Thyroid gland (tissue), 4 donors: ENCODE measurements at regions of chr5 and their contacts with region 1.

Region 1: DNA sequence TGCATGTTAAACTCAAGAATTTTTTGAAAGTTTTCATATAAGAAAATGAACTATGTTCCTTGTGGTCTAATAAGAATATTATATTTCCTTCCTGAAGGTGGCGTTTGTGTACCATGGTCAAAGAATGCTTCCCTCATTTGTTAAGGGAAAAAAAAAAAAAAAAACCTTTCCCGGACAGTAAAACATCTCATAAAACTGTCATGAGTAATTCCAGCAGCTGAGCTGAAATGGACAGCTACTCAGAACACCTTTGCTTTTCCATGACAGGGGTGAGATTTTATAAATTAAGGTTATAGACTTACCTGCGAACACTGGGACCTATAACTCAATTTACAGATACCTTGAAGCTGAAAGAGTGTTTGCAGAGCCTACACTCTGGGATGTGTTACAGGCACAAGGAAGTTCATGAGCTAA is 113.2 kb upstream of the RANBP3L start:
- DNase-seq: no peak
- H3K4me3 ChIP-seq: no peak overlapping the region
- H3K27ac ChIP-seq: no peak overlapping the region
- H3K4me1 ChIP-seq: no peaks in the 10 kb centered on the region
- H3K27me3 ChIP-seq: no peaks in the 10 kb centered on the region
- CTCF ChIP-seq: peak in 4 of 6 experiments; percentile 6 to 75 (median 62)
- POLR2A ChIP-seq: no peak

Region 2: DNA sequence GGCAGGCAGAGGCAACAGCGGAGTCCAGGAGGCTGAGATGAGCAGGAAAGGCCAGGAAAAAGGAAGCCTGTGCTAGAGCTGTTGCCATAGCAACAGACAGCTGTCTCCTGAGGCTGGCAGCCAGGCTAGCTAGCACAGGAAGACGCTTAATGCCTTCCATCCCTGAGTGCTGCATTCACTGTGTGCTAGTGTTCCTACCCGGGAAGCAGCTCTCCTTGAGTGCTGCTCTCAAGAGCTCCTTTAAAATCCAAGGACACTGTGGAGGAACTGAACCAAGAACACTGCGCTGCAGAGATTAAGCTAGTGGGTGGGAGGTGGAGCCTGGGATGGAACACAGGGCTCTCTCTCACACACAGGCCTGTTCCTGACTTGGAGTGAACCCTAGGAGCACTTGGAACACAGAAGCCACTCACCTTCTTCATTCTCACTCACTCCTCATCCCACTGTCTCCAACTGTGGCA is 611.7 kb before region 1 on chr5:
- intact Hi-C with region 1: no loop called
- DNase-seq: peak; percentile 77 to 83
- H3K4me3 ChIP-seq: no peak overlapping the region
- H3K27ac ChIP-seq: peak overlapping the region in 2 of 3 donors; percentile 16 to 19
- H3K4me1 ChIP-seq: peaks cover 21 to 26% of the 10 kb centered on the region in 2 donors
- H3K27me3 ChIP-seq: no peaks in the 10 kb centered on the region
- CTCF ChIP-seq: no peak
- POLR2A ChIP-seq: no peak

Region 3: GRCh38 chr5:36507332-36507952 is 92.6 kb after region 1 on chr5:
- intact Hi-C with region 1: loop called (anchors 5 kb)
- DNase-seq: peak; percentile 75 to 86
- H3K4me3 ChIP-seq: no peak overlapping the region
- H3K27ac ChIP-seq: no peak overlapping the region
- H3K4me1 ChIP-seq: no peaks in the 10 kb centered on the region
- H3K27me3 ChIP-seq: no peaks in the 10 kb centered on the region
- CTCF ChIP-seq: peak; percentile 47 to 87 (median 66)
- POLR2A ChIP-seq: no peak

Region 4: GRCh38 chr5:36690041-36690961 is 275.4 kb after region 1 on chr5:
- intact Hi-C with region 1: loop called (anchors 5 kb)
- DNase-seq: peak; percentile 77 to 84
- H3K4me3 ChIP-seq: peak overlapping the region; percentile 48 to 79 (median 56)
- H3K27ac ChIP-seq: peak overlapping the region; percentile 34 to 67 (median 58)
- H3K4me1 ChIP-seq: peaks cover 11 to 15% of the 10 kb centered on the region in 2 donors
- H3K27me3 ChIP-seq: no peaks in the 10 kb centered on the region
- CTCF ChIP-seq: peak; percentile 51 to 87 (median 80)
- POLR2A ChIP-seq: no peak